Ovary (tissue), 10 donors: ENCODE measurements at regions of chr3 and their contacts with region 1.

Region 1: GRCh38 chr3:43866529-43867353 is 176.0 kb downstream of the ABHD5 start:
- DNase-seq: no peak
- H3K4me3 ChIP-seq: no peak overlapping the region
- H3K27ac ChIP-seq: no peak overlapping the region
- H3K4me1 ChIP-seq: peaks cover 4% of the 10 kb centered on the region
- H3K27me3 ChIP-seq: no peaks in the 10 kb centered on the region
- CTCF ChIP-seq: no peak
- EP300 ChIP-seq: no peak
- POLR2A ChIP-seq: no peak

Region 2: GRCh38 chr3:43531835-43532234 is 334.9 kb before region 1 on chr3:
- intact Hi-C with region 1: loop called in 1 of 4 experiments (anchors 10 kb)
- DNase-seq: no peak
- H3K4me3 ChIP-seq: no peak overlapping the region
- H3K27ac ChIP-seq: no peak overlapping the region
- H3K4me1 ChIP-seq: no peaks in the 10 kb centered on the region
- H3K27me3 ChIP-seq: no peaks in the 10 kb centered on the region
- CTCF ChIP-seq: no peak
- EP300 ChIP-seq: no peak
- POLR2A ChIP-seq: no peak